ENCODE measurements at regions of chr20 and their contacts with region 1.

Region 1: DNA sequence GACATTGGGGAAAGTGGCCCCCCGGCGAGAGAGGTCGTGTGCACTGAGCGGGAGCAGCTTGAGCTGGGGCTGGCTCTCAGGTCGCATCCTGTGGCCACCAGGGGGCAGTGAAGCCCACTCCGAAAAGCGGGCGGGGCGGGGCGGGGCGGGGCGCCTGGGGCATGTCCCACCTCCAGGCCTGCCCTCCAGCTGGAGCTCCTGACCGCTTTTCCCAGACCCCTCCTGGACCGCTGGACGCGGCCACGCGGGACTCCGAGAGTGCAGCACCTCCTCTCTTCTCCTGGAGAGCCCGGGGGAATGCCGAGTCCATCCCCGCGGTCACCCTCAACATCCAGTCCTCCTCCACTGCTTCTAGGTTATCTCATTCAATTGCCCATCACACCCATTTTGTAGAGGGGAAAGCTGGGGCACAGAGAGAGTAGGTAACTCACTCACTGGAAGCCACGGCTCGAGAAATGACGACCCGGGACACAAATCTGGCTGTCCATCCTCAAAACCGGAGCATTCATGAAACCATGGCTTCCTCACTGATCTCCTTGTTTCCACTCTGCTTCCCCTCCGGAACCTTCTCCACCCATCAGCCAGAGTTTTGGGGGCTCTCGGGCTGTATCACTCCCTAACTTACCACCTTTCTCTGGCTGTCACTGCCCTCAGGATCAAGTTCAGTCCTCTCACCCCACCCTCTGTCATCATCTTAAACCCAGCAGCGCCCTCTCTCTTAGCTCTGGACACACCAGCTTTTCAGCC is 24.1 kb downstream of the COX4I2 start:
- DNase-seq: peak; percentile 91
- CTCF ChIP-seq: peak; percentile 73

Region 2: DNA sequence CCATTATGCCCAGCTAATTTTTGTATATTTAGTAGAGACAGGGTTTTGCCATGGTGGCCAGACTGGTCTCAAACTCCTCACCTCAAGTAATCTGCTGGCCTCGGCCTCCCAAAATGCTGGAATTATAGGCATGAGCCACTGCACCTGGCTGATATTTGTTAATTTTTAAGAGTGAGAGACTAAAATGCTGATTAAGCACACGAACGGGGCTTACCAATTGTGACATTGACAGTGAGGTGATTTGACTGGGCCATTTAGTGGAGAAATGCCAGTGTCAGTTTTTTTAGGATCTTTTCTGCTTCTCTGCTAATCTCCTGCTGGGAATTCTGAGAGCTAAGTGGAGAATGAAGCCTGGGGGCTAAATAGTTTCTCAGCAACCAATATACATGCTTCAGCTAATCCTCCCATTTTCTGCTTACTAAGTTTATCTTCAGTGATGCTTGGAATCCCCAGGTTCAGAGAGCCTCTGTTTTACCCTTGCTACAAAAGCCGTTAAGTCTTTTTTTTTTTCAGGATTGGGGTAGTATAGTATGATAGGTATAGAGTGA is 231.2 kb before region 1 on chr20:
- CTCF ChIA-PET with region 1: no interaction called
- POLR2A ChIA-PET with region 1: no interaction called
- DNase-seq: no peak
- CTCF ChIP-seq: no peak

Region 3: GRCh38 chr20:31572701-31573554 is 88.9 kb before region 1 on chr20:
- CTCF ChIA-PET with region 1: interaction called, 15 read pairs
- POLR2A ChIA-PET with region 1: no interaction called
- DNase-seq: peak; percentile 93
- CTCF ChIP-seq: no peak

Region 4: DNA sequence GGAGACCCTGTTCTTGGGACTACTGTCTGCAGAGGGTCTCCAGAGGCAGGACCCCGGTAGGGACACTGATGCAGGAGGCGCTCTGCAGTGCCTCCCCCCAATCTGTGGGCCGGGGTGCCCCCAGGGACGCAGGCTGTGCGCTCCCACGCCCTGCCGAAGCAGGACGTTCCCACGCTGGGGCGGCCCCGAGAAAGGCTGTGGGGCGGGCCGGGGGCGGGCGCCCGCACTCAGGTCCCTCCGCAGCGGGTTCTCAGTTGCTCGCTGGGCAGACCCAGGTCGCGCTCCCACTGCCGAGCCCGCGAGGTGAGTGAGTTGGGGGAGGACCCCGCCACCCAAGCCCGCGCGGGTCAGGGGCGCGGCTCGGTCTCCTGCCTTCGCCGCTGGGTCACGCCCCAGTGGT is 24.1 kb before region 1 on chr20 and contains the start of gene COX4I2:
- CTCF ChIA-PET with region 1: interaction called, 47 read pairs
- POLR2A ChIA-PET with region 1: no interaction called
- DNase-seq: no peak
- CTCF ChIP-seq: no peak

Region 5: GRCh38 chr20:31674895-31675827 is 13.4 kb after region 1 on chr20:
- CTCF ChIA-PET with region 1: interaction called, 64 read pairs
- POLR2A ChIA-PET with region 1: interaction called, 5 read pairs
- DNase-seq: peak; percentile 57
- CTCF ChIP-seq: no peak

Region 6: GRCh38 chr20:31691646-31692275 is 30.0 kb after region 1 on chr20:
- CTCF ChIA-PET with region 1: interaction called, 28 read pairs
- POLR2A ChIA-PET with region 1: interaction called, 7 read pairs
- DNase-seq: peak; percentile 37
- CTCF ChIP-seq: no peak

Region 7: DNA sequence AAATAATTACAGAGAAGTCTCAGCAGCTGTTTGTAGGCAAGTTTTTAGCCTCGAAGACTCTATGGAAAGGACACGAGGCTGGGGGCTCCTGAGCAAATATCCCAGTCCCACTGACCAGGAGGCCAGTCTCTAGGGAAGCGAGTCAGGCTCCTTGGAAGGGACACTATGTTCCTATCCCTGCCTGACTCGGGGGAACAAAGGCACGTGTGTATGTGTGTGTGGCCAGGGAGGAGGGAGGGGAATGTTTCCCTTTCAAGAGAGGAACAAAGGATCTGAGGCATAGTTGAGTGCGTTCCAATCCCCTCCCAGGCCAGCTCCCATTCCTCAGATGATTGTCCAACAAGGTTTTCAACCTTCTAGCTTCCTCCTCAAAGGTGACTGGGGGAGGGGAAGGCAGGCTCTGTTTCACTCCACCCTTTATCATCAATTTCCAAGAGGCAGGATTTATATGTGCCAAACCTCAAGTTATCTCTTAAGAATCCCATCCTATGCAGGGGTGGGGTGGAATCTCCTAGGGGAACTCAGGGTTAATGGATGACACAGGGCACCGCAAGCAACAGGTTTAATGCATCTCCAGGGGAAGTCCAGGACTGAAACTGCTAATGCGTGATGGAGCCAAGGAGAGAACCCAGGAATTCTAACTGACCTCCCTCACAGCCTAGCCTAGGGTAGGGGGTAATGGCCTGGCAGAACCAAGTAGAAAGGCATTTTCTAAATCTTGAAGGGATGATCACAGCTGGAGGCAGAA is 50.9 kb after region 1 on chr20:
- CTCF ChIA-PET with region 1: interaction called, 429 read pairs
- POLR2A ChIA-PET with region 1: interaction called, 3 read pairs
- DNase-seq: no peak
- CTCF ChIP-seq: no peak

Region 8: DNA sequence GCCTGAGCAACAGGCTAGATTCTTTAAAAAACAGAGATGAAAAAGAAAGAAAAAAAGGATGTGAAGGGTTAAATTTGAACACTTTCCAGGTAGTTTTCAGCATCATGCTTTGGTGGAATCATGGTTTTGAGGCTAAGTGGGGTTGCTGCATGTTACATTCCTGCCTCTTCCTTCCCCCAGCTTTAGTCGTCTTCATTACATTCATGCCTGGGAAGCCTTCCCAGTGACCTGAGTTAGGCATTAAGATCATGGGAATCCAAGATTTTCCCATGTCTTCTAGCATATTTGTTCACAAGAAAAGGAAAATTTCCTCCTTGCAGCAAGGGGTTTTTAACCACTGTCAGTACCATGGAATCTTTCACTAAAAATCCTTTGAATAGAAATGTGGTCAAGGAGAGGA is 89.3 kb after region 1 on chr20:
- CTCF ChIA-PET with region 1: interaction called, 15 read pairs
- POLR2A ChIA-PET with region 1: no interaction called
- DNase-seq: no peak
- CTCF ChIP-seq: no peak